Breast epithelium (tissue), 4 donors: ENCODE measurements at regions of chr10 and their contacts with region 1.

Region 1: DNA sequence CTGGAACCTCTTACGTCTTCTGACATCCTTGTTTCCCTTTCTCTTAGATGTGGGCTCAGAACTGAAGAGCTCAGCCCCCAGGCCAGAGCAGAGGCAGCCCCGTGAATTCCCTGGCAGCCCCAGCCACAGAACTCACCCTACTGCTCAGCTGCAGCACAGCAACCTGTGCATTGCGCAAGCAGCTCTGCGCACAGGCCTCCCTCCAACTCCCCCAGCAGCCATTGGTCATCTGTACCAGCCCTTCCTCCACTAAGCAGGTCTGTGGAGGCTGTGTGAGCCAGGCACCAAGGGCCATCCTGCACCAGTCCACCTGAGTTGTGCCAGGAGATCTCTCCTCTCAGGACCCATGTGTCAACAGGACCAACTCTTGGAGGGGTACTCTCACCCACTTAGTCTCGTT is 54.5 kb downstream of the ZNF33B start:
- DNase-seq: no peak
- H3K4me3 ChIP-seq: no peak overlapping the region
- H3K27ac ChIP-seq: no peak overlapping the region
- H3K4me1 ChIP-seq: no peaks in the 10 kb centered on the region
- H3K27me3 ChIP-seq: no peaks in the 10 kb centered on the region
- CTCF ChIP-seq: no peak
- POLR2A ChIP-seq: no peak

Region 2: GRCh38 chr10:42801135-42801534 is 217.3 kb after region 1 on chr10:
- intact Hi-C with region 1: loop called (anchors 10 kb)
- DNase-seq: no peak
- H3K4me3 ChIP-seq: no peak overlapping the region
- H3K27ac ChIP-seq: no peak overlapping the region
- H3K4me1 ChIP-seq: no peaks in the 10 kb centered on the region
- H3K27me3 ChIP-seq: no peaks in the 10 kb centered on the region
- CTCF ChIP-seq: no peak
- POLR2A ChIP-seq: no peak